ENCODE measurements at regions of chr5 and their contacts with region 1.

Region 1: DNA sequence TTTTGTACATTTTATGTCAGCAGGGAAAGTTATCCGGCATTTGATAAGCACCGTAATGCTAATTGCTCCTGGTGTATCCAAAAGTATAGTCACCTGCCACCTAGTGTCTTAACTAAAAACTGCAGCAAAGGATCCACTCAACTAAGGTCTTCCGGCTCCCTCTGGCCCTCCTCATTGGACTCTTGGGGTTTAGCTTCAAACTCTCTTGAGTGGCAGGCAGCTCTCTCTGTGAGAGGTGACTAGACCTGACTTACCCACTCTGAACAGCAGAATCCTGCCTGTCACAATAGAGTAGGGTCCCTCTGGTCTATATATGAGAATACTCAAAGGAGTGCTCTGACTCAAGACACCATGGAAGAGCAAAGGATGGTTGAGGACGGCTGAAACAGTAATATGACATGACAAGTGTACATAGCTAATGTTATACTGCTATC is 60.3 kb upstream of the CAST start:
- DNase-seq: no peak

Region 2: DNA sequence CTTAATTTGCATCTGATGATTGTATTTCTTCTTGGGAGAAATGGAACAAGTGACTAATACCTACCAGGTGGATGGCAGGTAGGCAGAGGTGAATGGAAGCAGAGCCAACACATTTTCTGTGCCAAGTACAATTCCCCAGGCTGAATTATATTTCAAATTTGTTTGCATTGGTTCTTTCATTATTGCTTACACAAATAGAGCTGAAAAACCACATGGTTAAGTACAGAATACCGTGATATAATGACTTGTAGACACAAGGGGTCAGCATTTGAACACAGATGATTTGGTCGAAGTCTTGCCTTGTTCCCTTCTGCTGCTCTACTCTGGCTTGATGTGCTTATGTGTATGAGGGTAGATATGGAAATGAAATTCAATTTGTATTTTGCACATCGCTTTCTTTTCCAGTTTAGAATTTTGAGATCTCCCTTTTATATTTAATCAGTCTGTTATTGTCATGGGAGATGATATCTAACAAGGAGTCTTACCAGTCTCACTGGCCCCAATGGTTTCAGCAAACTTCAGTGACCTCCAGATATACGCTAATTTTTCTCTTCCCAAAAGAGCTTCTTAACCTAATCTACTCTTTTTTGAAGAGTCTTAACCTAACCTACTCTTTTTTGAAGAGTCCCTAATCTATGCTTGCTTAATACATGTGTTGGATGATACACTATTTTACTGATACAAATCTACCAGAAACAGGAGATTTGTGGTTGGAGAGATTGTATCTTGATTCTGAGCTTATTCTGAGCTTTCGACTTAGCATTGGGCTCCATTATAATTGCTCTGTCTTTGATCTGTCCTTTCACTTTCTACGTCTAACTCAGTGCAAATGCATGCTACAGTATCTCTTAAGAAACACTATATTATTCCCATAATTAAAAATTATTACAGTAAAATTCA is 256.9 kb before region 1 on chr5:
- intact Hi-C with region 1: loop called (anchors 5 to 10 kb)
- DNase-seq: no peak

Region 3: GRCh38 chr5:96565582-96566265 is 36.1 kb before region 1 on chr5:
- intact Hi-C with region 1: no loop called
- DNase-seq: no peak

Measured in posterior vena cava (tissue), 2 donors.